Activated CD8-positive, alpha-beta T cell treated with anti-CD3 and anti-CD28 coated beads for 36 hours (primary cell): ENCODE measurements at regions of chr3 and their contacts with region 1.

Region 1: DNA sequence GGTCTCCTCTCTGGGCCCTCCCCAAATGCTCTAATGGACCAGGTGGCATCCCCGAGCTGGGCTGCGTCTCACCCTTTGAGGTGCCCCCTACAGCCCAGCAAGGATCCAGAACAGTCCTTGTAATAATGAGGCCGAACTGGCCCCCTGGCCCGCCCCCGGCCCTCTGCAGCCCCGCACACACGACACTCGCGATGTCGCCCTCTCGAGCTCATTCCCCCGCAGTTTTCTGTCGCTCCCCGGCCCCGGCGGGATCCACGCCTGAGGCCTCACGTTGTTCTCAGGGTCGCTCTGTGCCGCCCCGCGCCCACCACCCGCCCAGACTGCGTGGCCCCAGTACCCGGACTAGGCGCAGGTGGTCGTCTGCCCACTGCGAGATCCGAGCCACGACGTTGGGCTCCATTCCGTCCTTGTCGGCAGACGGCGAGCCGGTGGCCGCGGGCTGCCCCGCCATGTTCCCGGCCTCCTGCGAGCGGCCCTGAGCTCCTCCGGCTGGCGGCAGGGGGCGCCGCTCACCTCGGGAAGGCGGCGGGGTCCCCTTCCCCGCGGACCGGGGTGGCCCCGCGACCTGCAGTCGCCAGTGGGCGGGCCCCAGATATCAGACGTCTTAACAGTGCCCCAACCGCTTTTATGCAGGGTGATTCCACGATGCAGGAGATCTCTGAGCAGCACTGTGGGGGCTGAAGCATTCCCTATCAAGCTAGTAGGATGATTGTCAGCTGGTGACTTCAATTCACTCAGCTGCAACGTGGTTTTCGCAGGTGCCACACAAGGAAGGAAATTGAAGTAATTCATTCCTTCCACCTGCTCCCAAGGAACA is at the start of gene C3orf33:
- DNase-seq: peak; percentile 79
- ATAC-seq: peak; percentile 98
- H3K4me3 Mint-ChIP-seq: peak within 1 kb of the TSS; percentile 86
- H3K27ac Mint-ChIP-seq: peak within 1 kb of the TSS; percentile 88
- H3K4me1 Mint-ChIP-seq: peaks cover 18% of the 10 kb centered on the region
- H3K27me3 Mint-ChIP-seq: peaks cover 9% of the 10 kb centered on the region
- CTCF ChIP-seq: peak; percentile 85
- total RNA-seq, gene C3orf33: 2.4 to 3.6 TPM

Region 2: DNA sequence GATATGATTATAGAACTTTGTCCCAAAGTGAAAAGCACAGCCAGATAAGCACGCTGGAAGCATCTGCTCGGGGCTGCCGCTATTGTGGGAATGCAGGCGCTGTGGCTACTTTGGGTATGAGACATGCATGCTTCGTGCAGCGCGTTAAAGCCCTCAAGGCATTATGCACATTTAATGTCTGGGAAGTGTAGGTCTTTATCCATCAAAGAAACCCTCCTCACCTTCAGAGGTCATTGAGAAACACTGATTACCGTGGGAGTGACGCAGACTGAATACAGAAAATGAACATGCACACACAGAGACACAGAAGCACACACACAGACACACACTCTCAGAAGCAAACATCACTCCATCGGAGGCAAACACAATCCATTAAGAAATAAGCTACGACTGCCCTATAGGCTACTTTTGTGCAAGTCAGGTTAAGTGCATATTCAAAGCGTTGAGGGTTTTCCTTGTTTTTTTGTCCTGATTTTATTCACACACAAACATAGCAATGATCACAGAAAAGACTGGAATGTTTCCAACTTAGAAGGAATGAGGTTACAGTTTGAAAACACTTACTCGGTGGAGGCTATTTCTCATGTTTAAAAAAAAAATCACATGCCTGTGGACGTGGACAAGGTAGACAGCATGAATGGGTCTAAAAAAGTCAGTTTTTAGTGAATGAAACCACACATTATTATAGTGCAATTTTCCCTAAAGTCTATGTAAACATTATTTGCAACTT is 129.6 kb before region 1 on chr3:
- CTCF ChIA-PET with region 1: no interaction called
- POLR2A ChIA-PET with region 1: no interaction called
- intact Hi-C with region 1: no loop called
- DNase-seq: no peak
- ATAC-seq: no peak
- H3K4me3 Mint-ChIP-seq: no peak overlapping the region
- H3K27ac Mint-ChIP-seq: no peak overlapping the region
- H3K4me1 Mint-ChIP-seq: no peaks in the 10 kb centered on the region
- H3K27me3 Mint-ChIP-seq: peaks cover 2% of the 10 kb centered on the region
- CTCF ChIP-seq: no peak

Region 3: GRCh38 chr3:155772801-155773200 is 33.2 kb before region 1 on chr3:
- CTCF ChIA-PET with region 1: interaction called, 10 read pairs
- POLR2A ChIA-PET with region 1: no interaction called
- intact Hi-C with region 1: no loop called
- DNase-seq: no peak
- ATAC-seq: no peak
- H3K4me3 Mint-ChIP-seq: no peak overlapping the region
- H3K27ac Mint-ChIP-seq: no peak overlapping the region
- H3K4me1 Mint-ChIP-seq: no peaks in the 10 kb centered on the region
- H3K27me3 Mint-ChIP-seq: no peaks in the 10 kb centered on the region
- CTCF ChIP-seq: no peak

Region 4: DNA sequence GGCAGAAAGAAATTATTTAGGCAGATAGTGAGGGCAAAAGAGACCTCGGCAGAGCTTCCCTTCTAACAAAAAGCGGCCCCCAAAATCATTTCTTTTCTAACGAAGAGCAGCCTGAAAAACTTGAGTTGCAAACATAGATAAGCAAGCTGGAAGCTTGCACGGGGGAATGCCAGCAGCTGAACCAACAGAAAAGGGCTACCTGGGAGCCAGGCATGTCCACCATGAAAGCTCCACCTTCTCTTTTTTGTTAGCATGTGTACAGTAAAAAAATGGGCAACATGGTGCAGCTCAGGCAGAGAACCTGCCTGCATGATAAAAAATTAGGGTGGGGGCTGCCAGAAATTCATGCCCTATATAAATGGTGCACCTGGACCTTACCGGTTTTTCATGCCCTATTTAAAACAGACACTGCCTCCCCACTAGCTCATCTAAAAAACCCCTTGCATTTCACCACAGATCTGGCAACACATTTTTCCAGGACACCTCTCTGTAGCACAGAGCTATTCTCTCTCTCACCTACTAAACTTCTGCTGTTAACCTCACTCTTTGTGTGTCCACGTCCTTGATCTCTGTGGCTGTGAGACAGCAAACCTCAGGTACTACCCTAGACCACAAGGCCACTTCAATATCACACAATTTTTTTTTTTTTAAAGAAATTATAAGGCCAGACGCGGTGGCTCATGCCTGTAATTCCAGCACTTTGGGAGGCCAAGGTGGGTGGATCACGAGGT is 29.5 kb after region 1 on chr3:
- CTCF ChIA-PET with region 1: interaction called, 20 read pairs
- POLR2A ChIA-PET with region 1: interaction called, 4 read pairs
- intact Hi-C with region 1: no loop called
- DNase-seq: peak; percentile 15
- ATAC-seq: peak; percentile 17
- H3K4me3 Mint-ChIP-seq: no peak overlapping the region
- H3K27ac Mint-ChIP-seq: no peak overlapping the region
- H3K4me1 Mint-ChIP-seq: peaks cover 5% of the 10 kb centered on the region
- H3K27me3 Mint-ChIP-seq: no peaks in the 10 kb centered on the region
- CTCF ChIP-seq: no peak

Region 5: DNA sequence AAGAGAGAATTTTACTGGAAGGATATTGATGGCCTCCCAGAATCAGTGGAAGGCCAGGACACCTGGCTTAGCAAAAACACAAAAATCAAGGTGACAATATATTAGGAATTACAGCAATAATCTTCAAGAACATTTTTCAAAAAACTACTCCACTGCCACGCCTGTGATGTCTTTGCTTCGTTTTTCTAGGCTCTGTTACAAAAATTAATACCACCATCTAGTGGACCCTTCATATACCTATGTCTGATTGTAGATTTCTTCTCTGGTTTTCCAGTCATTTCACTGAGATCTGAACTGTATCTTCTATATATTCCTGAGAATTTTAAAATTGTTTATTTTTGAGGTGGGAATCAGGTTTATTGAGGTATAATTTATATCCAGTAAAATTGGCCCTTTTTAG is 53.8 kb after region 1 on chr3:
- CTCF ChIA-PET with region 1: interaction called, 15 read pairs
- POLR2A ChIA-PET with region 1: no interaction called
- intact Hi-C with region 1: no loop called
- DNase-seq: no peak
- ATAC-seq: no peak
- H3K4me3 Mint-ChIP-seq: no peak overlapping the region
- H3K27ac Mint-ChIP-seq: no peak overlapping the region
- H3K4me1 Mint-ChIP-seq: peaks cover 19% of the 10 kb centered on the region
- H3K27me3 Mint-ChIP-seq: no peaks in the 10 kb centered on the region
- CTCF ChIP-seq: no peak

Region 6: GRCh38 chr3:155880286-155880685 is 74.3 kb after region 1 on chr3:
- CTCF ChIA-PET with region 1: interaction called, 10 read pairs
- POLR2A ChIA-PET with region 1: interaction called, 3 read pairs
- intact Hi-C with region 1: no loop called
- DNase-seq: no peak
- ATAC-seq: no peak
- H3K4me3 Mint-ChIP-seq: no peak overlapping the region
- H3K27ac Mint-ChIP-seq: no peak overlapping the region
- H3K4me1 Mint-ChIP-seq: peaks cover 62% of the 10 kb centered on the region
- H3K27me3 Mint-ChIP-seq: no peaks in the 10 kb centered on the region
- CTCF ChIP-seq: no peak

Region 7: DNA sequence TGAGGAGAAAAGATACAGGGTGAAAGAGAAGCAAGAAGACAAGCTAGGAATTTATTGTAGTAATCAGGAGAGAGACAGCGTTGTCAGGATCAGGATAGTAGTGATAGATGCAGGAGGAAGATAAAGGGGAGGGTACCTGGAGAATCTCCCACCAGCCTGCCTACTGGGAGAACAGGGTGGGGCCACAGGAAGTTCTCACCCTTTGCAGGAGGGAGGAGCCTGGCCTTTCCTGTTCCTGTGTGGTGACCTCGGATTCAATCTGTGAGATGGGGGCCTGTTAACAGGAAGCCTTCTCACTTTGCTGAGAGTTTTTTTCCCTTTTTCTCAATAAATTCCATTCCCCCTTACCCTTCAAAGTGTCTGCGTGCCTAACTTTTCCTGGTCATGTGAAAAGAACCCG is 102.1 kb after region 1 on chr3:
- CTCF ChIA-PET with region 1: interaction called, 11 read pairs
- POLR2A ChIA-PET with region 1: no interaction called
- intact Hi-C with region 1: no loop called
- DNase-seq: peak; percentile 7
- ATAC-seq: peak; percentile 39
- H3K4me3 Mint-ChIP-seq: no peak overlapping the region
- H3K27ac Mint-ChIP-seq: peak overlapping the region; percentile 67
- H3K4me1 Mint-ChIP-seq: peaks cover 11% of the 10 kb centered on the region
- H3K27me3 Mint-ChIP-seq: no peaks in the 10 kb centered on the region
- CTCF ChIP-seq: no peak

Region 8: GRCh38 chr3:156174229-156174847 is 368.3 kb after region 1 on chr3:
- CTCF ChIA-PET with region 1: no interaction called
- POLR2A ChIA-PET with region 1: no interaction called
- intact Hi-C with region 1: no loop called
- DNase-seq: no peak
- ATAC-seq: no peak
- H3K4me3 Mint-ChIP-seq: no peak overlapping the region
- H3K27ac Mint-ChIP-seq: no peak overlapping the region
- H3K4me1 Mint-ChIP-seq: no peaks in the 10 kb centered on the region
- H3K27me3 Mint-ChIP-seq: peaks cover 6% of the 10 kb centered on the region
- CTCF ChIP-seq: no peak